Left cardiac atrium (tissue), 4 donors: ENCODE measurements at regions of chr17 and their contacts with region 1.

Region 1: GRCh38 chr17:48791128-48792032 is 25.6 kb downstream of the TTLL6 start:
- DNase-seq: peak; percentile 83
- ATAC-seq: peak; percentile 88 to 93

Region 2: GRCh38 chr17:48655913-48656312 is 135.5 kb before region 1 on chr17:
- intact Hi-C with region 1: no loop called
- DNase-seq: no peak
- ATAC-seq: no peak

Region 3: GRCh38 chr17:48724251-48725003 is 67.0 kb before region 1 on chr17:
- intact Hi-C with region 1: loop called (anchors 1 to 2 kb)
- DNase-seq: peak; percentile 90
- ATAC-seq: peak; percentile 86 to 90